ENCODE measurements at regions of chr3 and their contacts with region 1.

Region 1: DNA sequence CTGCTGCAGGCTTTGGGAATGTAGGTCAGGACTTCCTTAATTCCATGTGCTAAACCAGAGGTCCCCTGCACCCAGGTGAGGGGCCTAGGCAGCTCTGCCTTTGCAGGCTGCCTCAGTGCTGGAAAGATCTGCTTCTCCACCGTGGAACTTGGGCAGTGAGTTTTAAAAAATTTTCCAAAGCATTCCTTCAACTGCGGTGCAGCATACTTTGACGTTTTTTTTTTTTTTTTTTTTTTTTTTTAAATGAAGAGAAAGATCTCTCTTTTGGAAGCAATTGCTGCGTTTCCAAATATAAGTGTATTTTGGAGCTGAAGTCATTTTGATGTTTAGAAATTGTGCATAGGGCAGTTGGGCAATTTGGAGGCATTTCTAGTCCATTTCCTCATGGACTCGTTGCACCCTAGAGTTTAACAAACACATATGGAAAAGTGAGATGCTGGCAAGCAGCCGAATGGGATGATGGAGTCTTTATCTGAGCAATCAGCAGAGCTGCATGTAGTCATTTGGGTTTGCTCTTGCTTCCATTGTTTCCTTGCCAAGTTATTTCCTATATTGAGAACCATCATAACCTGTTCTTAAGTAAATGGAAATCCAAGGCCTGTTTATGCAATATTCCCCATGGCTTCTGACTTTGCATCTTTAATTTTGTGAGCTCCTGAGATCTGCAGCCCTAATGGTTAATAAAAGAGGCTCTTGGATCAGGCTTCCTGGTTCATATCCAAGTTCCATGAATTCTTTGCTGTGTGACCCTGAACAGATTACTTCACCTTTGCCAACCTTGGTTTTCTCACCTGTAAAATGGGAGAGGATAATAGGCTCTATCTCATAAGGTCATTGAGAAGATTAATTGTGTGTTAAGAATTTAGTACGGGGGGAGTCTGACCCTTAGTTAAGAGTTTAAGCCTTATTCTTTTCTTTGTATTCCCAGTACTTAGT is 31.2 kb downstream of the ITPR1 start:
- DNase-seq: no peak
- ATAC-seq: no peak
- H3K4me3 ChIP-seq: no peak overlapping the region
- H3K4me3 Mint-ChIP-seq: no peak overlapping the region
- H3K27ac ChIP-seq: no peak overlapping the region
- H3K27ac Mint-ChIP-seq: no peak overlapping the region
- H3K4me1 ChIP-seq: peaks cover 3 to 6% of the 10 kb centered on the region in 2 donors
- H3K4me1 Mint-ChIP-seq: peaks cover 21 to 65% (median 34%) of the 10 kb centered on the region in 7 donors
- H3K27me3 ChIP-seq: no peaks in the 10 kb centered on the region
- H3K27me3 Mint-ChIP-seq: no peaks in the 10 kb centered on the region

Region 2: DNA sequence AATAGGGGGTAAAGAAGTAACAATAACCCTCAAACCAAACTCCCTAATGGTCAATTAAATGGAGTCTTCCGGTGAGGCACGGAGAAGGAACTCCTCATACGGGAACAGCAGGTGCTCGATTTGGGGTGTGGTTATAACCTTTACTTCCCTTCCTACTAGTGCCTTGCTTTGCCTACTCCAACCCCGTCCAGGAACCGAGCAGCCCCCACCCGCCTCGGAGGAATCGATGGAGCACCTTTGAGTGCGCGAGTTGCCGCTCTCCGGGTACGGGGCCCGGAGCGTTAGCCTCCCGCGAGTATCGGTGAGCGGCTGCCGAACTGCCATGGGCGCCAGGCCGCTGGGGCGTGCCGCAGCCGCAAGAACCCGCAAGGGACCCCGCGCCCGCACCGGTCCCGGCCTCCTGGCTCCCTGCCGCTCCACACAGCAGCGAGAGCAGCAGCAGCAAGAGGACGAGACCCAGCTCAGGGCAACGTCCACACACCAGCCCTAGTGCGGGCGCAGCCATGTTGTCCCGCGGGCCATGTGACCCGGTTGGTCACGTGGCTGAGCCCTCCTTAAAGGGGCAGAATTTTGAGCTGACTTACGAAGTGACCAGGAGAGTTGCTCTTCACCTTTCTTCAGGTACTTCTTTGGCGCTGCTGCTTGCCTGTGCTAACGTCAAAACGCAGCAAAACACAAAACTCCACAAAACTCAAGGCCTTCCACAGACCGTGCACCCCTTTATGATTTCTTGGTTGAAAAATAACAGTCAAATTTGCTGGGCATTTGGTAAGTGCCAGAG is 57.4 kb before region 1 on chr3 and contains the start of gene SUMF1:
- CTCF ChIA-PET with region 1: interaction called, 7 read pairs
- POLR2A ChIA-PET with region 1: interaction called, 5 read pairs
- intact Hi-C with region 1: loop called in 1 of 2 experiments (anchors 1 kb)
- DNase-seq: peak; percentile 59 to 79 (median 70)
- ATAC-seq: peak; percentile 98
- H3K4me3 ChIP-seq: peak within 1 kb of the TSS; percentile 90
- H3K4me3 Mint-ChIP-seq: peak within 1 kb of the TSS; percentile 90 to 95 (median 92)
- H3K27ac ChIP-seq: peak within 1 kb of the TSS; percentile 77
- H3K27ac Mint-ChIP-seq: peak within 1 kb of the TSS; percentile 86 to 96 (median 94)
- H3K4me1 ChIP-seq: peaks cover 5 to 7% of the 10 kb centered on the region in 2 donors
- H3K4me1 Mint-ChIP-seq: peaks cover 12 to 38% (median 21%) of the 10 kb centered on the region in 7 donors
- H3K27me3 ChIP-seq: no peaks in the 10 kb centered on the region
- H3K27me3 Mint-ChIP-seq: peaks cover 0 to 2% (median under 1%) of the 10 kb centered on the region in 5 donors
- total RNA-seq, gene SUMF1: 9.2 to 20.0 (median 16.0) TPM

Region 3: GRCh38 chr3:4504340-4505261 is 19.8 kb before region 1 on chr3:
- CTCF ChIA-PET with region 1: interaction called, 6 read pairs
- POLR2A ChIA-PET with region 1: interaction called, 41 read pairs
- intact Hi-C with region 1: loop called in 1 of 2 experiments (anchors 1 kb)
- DNase-seq: peak in 7 of 9 donors; percentile 45 to 67 (median 52)
- ATAC-seq: peak; percentile 79
- H3K4me3 ChIP-seq: peak overlapping the region; percentile 78
- H3K4me3 Mint-ChIP-seq: peak overlapping the region; percentile 81 to 95 (median 89)
- H3K27ac ChIP-seq: peak overlapping the region; percentile 79
- H3K27ac Mint-ChIP-seq: peak overlapping the region; percentile 90 to 96 (median 94)
- H3K4me1 ChIP-seq: peaks cover 18 to 22% of the 10 kb centered on the region in 2 donors
- H3K4me1 Mint-ChIP-seq: peaks cover 44 to 63% (median 57%) of the 10 kb centered on the region in 7 donors
- H3K27me3 ChIP-seq: no peaks in the 10 kb centered on the region
- H3K27me3 Mint-ChIP-seq: no peaks in the 10 kb centered on the region

Region 4: GRCh38 chr3:4571690-4572334 is 47.5 kb after region 1 on chr3:
- CTCF ChIA-PET with region 1: interaction called, 5 read pairs
- POLR2A ChIA-PET with region 1: no interaction called
- intact Hi-C with region 1: loop called (anchors 1 to 5 kb)
- DNase-seq: peak in 2 of 9 donors; percentile 12 to 18
- ATAC-seq: peak; percentile 49
- H3K4me3 ChIP-seq: no peak overlapping the region
- H3K4me3 Mint-ChIP-seq: no peak overlapping the region
- H3K27ac ChIP-seq: no peak overlapping the region
- H3K27ac Mint-ChIP-seq: peak overlapping the region in 2 of 9 donors; percentile 28 to 40
- H3K4me1 ChIP-seq: no peaks in the 10 kb centered on the region
- H3K4me1 Mint-ChIP-seq: peaks cover 6 to 59% (median 43%) of the 10 kb centered on the region in 7 donors
- H3K27me3 ChIP-seq: no peaks in the 10 kb centered on the region
- H3K27me3 Mint-ChIP-seq: no peaks in the 10 kb centered on the region

Region 5: DNA sequence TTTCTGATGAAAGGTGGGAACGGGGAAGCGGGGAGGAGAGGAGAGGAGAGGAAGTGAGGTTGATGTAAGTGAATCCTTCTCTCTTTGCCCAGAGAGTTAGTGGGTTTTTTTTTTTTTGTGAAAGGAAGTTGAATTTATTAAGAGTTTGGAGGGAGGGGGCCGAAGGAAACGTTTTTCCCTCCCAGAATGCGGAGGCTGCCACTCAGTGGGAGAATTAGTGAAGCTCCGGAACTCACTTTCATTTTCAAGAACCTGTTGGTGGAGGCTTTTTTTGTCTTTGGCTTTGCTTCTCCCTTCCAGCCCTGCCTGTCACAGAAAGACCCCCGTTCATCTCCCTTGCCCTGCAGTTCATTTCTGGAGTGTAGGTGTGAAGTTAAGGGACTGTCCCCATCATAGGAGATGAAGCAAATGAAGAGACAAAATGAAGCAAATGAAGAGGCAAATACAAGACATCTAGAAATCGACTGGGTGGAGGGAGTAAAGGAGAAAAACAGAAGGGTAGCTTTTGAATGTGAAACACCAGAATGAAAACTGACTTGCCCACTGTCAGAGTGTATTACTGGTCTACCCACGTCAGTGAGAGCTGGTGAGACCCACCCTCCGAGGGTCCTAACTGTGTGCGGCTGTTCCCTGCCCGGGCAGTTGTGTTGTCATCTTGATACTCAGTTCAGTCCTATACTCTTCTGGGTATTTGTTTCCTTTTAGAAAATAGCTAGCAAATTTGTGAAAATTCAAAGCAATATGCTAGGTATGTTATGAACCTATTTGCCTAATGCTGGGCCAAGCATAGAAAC is 60.3 kb after region 1 on chr3:
- CTCF ChIA-PET with region 1: interaction called, 3 read pairs
- POLR2A ChIA-PET with region 1: no interaction called
- intact Hi-C with region 1: loop called in 1 of 2 experiments (anchors 1 kb)
- DNase-seq: peak in 6 of 9 donors; percentile 6 to 36 (median 26)
- ATAC-seq: peak; percentile 49
- H3K4me3 ChIP-seq: peak overlapping the region; percentile 38
- H3K4me3 Mint-ChIP-seq: peak overlapping the region; percentile 73 to 91 (median 86)
- H3K27ac ChIP-seq: peak overlapping the region; percentile 40
- H3K27ac Mint-ChIP-seq: peak overlapping the region; percentile 77 to 96 (median 85)
- H3K4me1 ChIP-seq: peaks cover 35 to 38% of the 10 kb centered on the region in 2 donors
- H3K4me1 Mint-ChIP-seq: peaks cover 29 to 90% (median 79%) of the 10 kb centered on the region in 7 donors
- H3K27me3 ChIP-seq: no peaks in the 10 kb centered on the region
- H3K27me3 Mint-ChIP-seq: no peaks in the 10 kb centered on the region